HCT116 (cell line): ENCODE measurements at regions of chr9 and their contacts with region 1.

Region 1: GRCh38 chr9:88280816-88281382 is 107.3 kb upstream of the SPIN1 start:
- DNase-seq: no peak
- ATAC-seq: peak; percentile 62
- H3K4me3 ChIP-seq: no peak overlapping the region
- H3K27ac ChIP-seq: no peak overlapping the region
- H3K4me1 ChIP-seq: peaks cover 0 to 15% of the 10 kb centered on the region in 2 experiments; a peak in 1 of 4 replicates
- H3K27me3 ChIP-seq: no peaks in the 10 kb centered on the region
- CTCF ChIP-seq: peak in 2 of 3 experiments; percentile 14 to 41; a peak in 3 of 6 replicates
- POLR2A ChIP-seq: no peak
- RAD21 ChIP-seq: peak; percentile 52

Region 2: DNA sequence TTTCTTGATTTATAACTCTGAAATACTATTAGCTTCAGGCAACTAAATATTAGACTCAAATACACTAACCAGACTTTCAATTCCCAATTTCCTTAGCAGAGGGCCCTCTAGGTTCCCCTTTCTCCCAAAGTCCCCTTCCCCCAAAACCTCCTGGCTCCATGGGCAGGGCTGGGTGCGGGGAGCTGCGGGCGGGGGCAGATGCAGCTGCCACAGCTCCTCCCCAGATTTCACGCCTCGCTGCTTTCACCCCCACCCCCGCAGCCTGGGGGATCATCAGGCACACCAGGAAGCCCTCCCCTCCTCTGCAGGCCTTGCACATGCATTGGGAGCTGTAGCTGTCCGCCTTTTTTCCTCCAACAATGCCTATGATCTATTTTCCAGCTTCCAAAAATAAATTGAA is 59.8 kb before region 1 on chr9:
- CTCF ChIA-PET with region 1: no interaction called
- POLR2A ChIA-PET with region 1: no interaction called
- RAD21 ChIA-PET with region 1: no interaction called
- intact Hi-C with region 1: loop called (anchors 10 kb)
- DNase-seq: no peak
- ATAC-seq: no peak
- H3K4me3 ChIP-seq: no peak overlapping the region
- H3K27ac ChIP-seq: no peak overlapping the region
- H3K4me1 ChIP-seq: no peaks in the 10 kb centered on the region
- H3K27me3 ChIP-seq: no peaks in the 10 kb centered on the region
- CTCF ChIP-seq: no peak
- POLR2A ChIP-seq: no peak
- RAD21 ChIP-seq: no peak

Region 3: GRCh38 chr9:88388172-88388885 is 107.4 kb after region 1 on chr9 and contains the start of gene SPIN1:
- CTCF ChIA-PET with region 1: no interaction called
- POLR2A ChIA-PET with region 1: no interaction called
- RAD21 ChIA-PET with region 1: no interaction called
- intact Hi-C with region 1: loop called (anchors 5 kb)
- DNase-seq: peak; percentile 55
- ATAC-seq: peak; percentile 87
- H3K4me3 ChIP-seq: peak within 1 kb of the TSS; percentile 69 to 93
- H3K27ac ChIP-seq: peak within 1 kb of the TSS; percentile 92
- H3K4me1 ChIP-seq: peaks cover 12 to 24% of the 10 kb centered on the region in 2 experiments
- H3K27me3 ChIP-seq: no peaks in the 10 kb centered on the region
- CTCF ChIP-seq: peak in 2 of 3 experiments; percentile 11 to 32; a peak in 1 of 6 replicates
- POLR2A ChIP-seq: no peak
- RAD21 ChIP-seq: peak; percentile 21; the same call in 1 of the 2 replicates
- total RNA-seq, gene SPIN1: 74.0 TPM